GM12878 (cell line): ENCODE measurements at regions of chr2 and their contacts with region 1.

Region 1: DNA sequence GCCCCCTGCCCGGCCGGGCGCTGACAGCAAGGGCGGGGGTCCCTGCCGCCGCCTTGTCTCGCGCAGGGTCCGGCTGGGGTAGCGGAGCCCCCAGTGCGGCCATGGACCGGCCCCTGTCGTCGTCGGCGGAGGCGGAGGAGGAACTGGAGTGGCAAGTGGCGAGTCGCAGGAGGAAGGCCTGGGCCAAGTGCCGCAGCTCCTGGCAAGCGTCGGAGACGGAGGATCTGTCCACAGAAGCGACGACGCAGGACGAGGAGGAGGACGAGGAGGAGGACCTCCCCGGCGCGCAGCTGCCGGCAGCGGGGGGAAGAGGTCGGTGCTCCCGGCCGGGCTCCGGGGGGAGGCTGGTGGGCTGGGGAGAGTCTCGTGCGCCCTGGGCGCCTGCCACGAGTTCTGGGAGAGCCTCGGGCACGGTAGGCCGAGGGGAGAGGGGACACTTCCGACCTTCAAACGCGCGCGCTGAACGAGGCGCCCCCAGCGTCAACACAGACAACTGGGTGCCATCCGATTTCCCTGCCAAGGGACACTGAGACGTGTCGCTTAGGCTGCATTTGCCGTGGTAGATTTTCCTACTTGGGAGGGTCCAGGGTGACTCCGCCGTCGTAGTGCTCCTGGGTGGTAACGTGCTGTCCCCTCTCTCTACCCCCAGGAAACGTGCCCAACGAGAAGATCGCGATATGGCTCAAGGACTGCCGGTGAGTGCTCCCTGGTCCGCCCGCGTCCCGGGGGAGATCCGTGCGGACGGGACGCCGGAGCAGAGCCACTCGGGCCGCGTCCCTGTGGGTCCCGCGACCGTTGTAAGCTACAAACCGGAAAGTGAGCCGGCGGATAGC is 652 bp downstream of the ITPRID2 start:
- DNase-seq: no peak
- ATAC-seq: peak; percentile 82
- H3K4me3 ChIP-seq: peak overlapping the region; percentile 81
- H3K27ac ChIP-seq: peak overlapping the region; percentile 41
- H3K4me1 ChIP-seq: no peaks in the 10 kb centered on the region
- H3K27me3 ChIP-seq: no peaks in the 10 kb centered on the region
- CTCF ChIP-seq: peak; percentile 21 to 49 (median 40); a peak in 4 of 6 replicates
- EP300 ChIP-seq: no peak
- POLR2A ChIP-seq: peak; percentile 61
- RAD21 ChIP-seq: no peak

Region 2: DNA sequence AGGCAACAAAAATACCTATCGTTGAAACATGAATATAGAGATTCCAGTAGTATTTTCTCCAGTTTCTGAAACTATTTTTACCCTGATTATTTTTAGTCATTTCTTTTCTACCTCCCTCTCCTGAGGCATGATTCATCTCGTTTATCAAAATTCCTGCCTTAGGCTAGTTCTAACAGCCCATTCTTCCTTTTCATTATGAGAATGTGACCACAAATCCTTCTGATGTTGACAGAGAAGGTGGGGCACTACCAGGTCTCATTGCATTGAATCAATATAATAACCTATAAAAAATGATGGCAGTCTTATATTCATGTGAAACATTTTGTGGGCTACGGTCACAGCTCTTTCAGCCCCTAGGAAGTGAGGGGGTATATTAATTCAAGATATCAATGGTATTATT is 1318.2 kb before region 1 on chr2:
- CTCF ChIA-PET with region 1: no interaction called
- POLR2A ChIA-PET with region 1: no interaction called
- RAD21 ChIA-PET with region 1: no interaction called
- SMC1A ChIA-PET with region 1: no interaction called
- in situ Hi-C with region 1: no loop called
- intact Hi-C with region 1: no loop called
- DNase-seq: no peak
- ATAC-seq: no peak
- H3K4me3 ChIP-seq: no peak overlapping the region
- H3K27ac ChIP-seq: no peak overlapping the region
- H3K4me1 ChIP-seq: no peaks in the 10 kb centered on the region
- H3K27me3 ChIP-seq: no peaks in the 10 kb centered on the region
- CTCF ChIP-seq: no peak
- EP300 ChIP-seq: no peak
- POLR2A ChIP-seq: no peak
- RAD21 ChIP-seq: no peak

Region 3: GRCh38 chr2:181586569-181587081 is 305.6 kb before region 1 on chr2:
- CTCF ChIA-PET with region 1: no interaction called
- POLR2A ChIA-PET with region 1: no interaction called
- RAD21 ChIA-PET with region 1: no interaction called
- SMC1A ChIA-PET with region 1: interaction called, 3 read pairs
- in situ Hi-C with region 1: no loop called
- intact Hi-C with region 1: loop called (anchors 10 kb)
- DNase-seq: peak; percentile 81
- ATAC-seq: peak; percentile 96
- H3K4me3 ChIP-seq: no peak overlapping the region
- H3K27ac ChIP-seq: peak overlapping the region; percentile 12; the same call in 1 of the 2 replicates
- H3K4me1 ChIP-seq: peaks cover 11% of the 10 kb centered on the region
- H3K27me3 ChIP-seq: no peaks in the 10 kb centered on the region
- CTCF ChIP-seq: no peak
- EP300 ChIP-seq: peak; percentile 45 to 68; a peak in 3 of 4 replicates
- POLR2A ChIP-seq: no peak
- RAD21 ChIP-seq: no peak

Region 4: GRCh38 chr2:181848261-181848886 is 43.8 kb before region 1 on chr2:
- CTCF ChIA-PET with region 1: no interaction called
- POLR2A ChIA-PET with region 1: no interaction called
- RAD21 ChIA-PET with region 1: no interaction called
- SMC1A ChIA-PET with region 1: no interaction called
- in situ Hi-C with region 1: no loop called
- intact Hi-C with region 1: no loop called
- DNase-seq: no peak
- ATAC-seq: no peak
- H3K4me3 ChIP-seq: no peak overlapping the region
- H3K27ac ChIP-seq: no peak overlapping the region
- H3K4me1 ChIP-seq: no peaks in the 10 kb centered on the region
- H3K27me3 ChIP-seq: no peaks in the 10 kb centered on the region
- CTCF ChIP-seq: no peak
- EP300 ChIP-seq: no peak
- POLR2A ChIP-seq: no peak
- RAD21 ChIP-seq: no peak

Region 5: DNA sequence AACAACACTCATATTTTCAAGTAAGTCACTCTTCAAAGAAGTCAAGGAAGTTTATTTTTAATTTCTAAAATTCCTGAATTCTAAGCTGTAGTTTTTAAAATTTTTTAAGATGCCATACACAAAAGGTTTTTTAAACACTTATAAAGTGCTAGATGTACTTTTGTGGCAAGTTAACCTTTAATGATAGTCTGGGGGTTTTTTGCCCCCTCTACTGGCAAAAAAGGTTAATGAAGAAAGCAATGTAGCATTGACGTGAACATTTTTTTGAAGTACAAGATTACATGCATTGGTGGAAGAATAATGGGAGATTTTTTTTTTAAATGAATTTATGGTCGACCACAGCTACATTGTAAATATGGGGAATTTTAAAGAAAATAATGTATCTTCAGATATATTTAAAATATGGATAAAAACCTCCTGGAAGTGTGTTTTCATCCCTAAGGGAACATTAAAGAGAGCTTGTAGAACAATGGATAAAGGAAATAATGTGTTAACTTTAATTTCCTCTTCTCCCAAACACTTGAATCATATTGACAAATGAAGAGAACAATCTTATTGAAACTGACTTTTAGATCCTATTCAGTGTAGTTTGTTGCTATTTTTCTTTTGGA is 11.9 kb after region 1 on chr2:
- CTCF ChIA-PET with region 1: interaction called, 30 read pairs
- POLR2A ChIA-PET with region 1: interaction called, 3 read pairs
- RAD21 ChIA-PET with region 1: interaction called, 6 read pairs
- SMC1A ChIA-PET with region 1: interaction called, 40 read pairs
- in situ Hi-C with region 1: no loop called
- intact Hi-C with region 1: no loop called
- DNase-seq: no peak
- ATAC-seq: peak; percentile 85
- H3K4me3 ChIP-seq: no peak overlapping the region
- H3K27ac ChIP-seq: no peak overlapping the region
- H3K4me1 ChIP-seq: peaks cover 20% of the 10 kb centered on the region; the same call in 1 of the 2 replicates
- H3K27me3 ChIP-seq: no peaks in the 10 kb centered on the region
- CTCF ChIP-seq: peak; percentile 56
- EP300 ChIP-seq: no peak
- POLR2A ChIP-seq: no peak
- RAD21 ChIP-seq: peak; percentile 60